ENCODE measurements at regions of chr6 and their contacts with region 1.

Region 1: GRCh38 chr6:145814501-145815308 is at the start of gene FBXO30:
- DNase-seq: peak; percentile 91
- H3K4me3 Mint-ChIP-seq: peak within 1 kb of the TSS; percentile 93
- H3K27ac Mint-ChIP-seq: peak within 1 kb of the TSS; percentile 94
- H3K4me1 Mint-ChIP-seq: peaks cover 34% of the 10 kb centered on the region
- H3K27me3 Mint-ChIP-seq: no peaks in the 10 kb centered on the region
- total RNA-seq, gene FBXO30: 5.0 to 5.1 TPM

Region 2: GRCh38 chr6:145734486-145735355 is 80.0 kb before region 1 on chr6:
- CTCF ChIA-PET with region 1: interaction called, 10 read pairs
- POLR2A ChIA-PET with region 1: interaction called, 37 read pairs
- intact Hi-C with region 1: loop called (anchors 1 kb)
- DNase-seq: peak; percentile 81
- H3K4me3 Mint-ChIP-seq: peak overlapping the region; percentile 89
- H3K27ac Mint-ChIP-seq: peak overlapping the region; percentile 95
- H3K4me1 Mint-ChIP-seq: peaks cover 22% of the 10 kb centered on the region
- H3K27me3 Mint-ChIP-seq: no peaks in the 10 kb centered on the region

Region 3: GRCh38 chr6:145865175-145865574 is 50.5 kb after region 1 on chr6:
- CTCF ChIA-PET with region 1: no interaction called
- POLR2A ChIA-PET with region 1: no interaction called
- intact Hi-C with region 1: loop called (anchors 1 kb)
- DNase-seq: no peak
- H3K4me3 Mint-ChIP-seq: no peak overlapping the region
- H3K27ac Mint-ChIP-seq: peak overlapping the region; percentile 67
- H3K4me1 Mint-ChIP-seq: peaks cover 32% of the 10 kb centered on the region
- H3K27me3 Mint-ChIP-seq: no peaks in the 10 kb centered on the region

Region 4: DNA sequence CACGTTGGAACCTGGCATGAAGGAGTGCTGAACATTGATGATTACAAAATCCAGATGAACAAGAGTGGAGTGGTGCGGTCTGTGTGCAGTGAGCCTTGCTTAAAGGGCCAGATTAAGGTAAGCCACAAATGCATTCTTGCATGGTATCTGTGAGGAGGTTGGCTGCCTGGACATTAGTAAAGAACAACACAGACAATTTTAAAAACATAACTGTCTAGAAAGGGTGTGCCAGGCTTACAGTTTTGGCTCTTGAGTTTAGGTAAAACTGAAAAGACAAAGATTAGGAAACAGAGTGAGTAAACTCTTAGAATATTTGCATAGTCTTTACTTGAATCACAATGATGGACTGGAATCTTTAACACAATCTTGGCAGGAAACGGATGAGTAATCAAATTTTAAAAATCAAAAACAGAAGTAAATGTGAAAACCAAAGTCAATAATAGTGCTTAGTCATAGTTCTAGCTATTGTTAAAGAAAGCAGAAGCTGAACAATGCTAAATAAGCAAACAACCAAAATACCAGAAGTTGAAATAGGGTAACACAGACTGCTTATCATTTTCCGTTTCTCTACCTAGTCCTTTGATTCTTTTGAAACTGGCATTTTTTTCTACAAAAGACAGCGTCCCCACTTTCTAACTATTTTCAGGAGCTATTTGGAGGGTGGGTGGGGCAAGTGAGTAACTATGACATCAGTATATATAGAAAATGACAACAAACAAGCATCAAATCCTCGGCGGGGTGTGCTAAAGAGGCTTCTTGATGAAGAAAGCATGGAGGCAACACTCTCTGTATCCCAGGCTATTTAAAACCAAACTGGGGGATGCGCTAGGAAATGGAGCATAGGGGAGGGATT is 543.1 kb after region 1 on chr6:
- CTCF ChIA-PET with region 1: no interaction called
- POLR2A ChIA-PET with region 1: no interaction called
- intact Hi-C with region 1: loop called (anchors 10 kb)
- DNase-seq: no peak
- H3K4me3 Mint-ChIP-seq: no peak overlapping the region
- H3K27ac Mint-ChIP-seq: no peak overlapping the region
- H3K4me1 Mint-ChIP-seq: peaks cover 4% of the 10 kb centered on the region
- H3K27me3 Mint-ChIP-seq: peaks cover 7% of the 10 kb centered on the region

Region 5: DNA sequence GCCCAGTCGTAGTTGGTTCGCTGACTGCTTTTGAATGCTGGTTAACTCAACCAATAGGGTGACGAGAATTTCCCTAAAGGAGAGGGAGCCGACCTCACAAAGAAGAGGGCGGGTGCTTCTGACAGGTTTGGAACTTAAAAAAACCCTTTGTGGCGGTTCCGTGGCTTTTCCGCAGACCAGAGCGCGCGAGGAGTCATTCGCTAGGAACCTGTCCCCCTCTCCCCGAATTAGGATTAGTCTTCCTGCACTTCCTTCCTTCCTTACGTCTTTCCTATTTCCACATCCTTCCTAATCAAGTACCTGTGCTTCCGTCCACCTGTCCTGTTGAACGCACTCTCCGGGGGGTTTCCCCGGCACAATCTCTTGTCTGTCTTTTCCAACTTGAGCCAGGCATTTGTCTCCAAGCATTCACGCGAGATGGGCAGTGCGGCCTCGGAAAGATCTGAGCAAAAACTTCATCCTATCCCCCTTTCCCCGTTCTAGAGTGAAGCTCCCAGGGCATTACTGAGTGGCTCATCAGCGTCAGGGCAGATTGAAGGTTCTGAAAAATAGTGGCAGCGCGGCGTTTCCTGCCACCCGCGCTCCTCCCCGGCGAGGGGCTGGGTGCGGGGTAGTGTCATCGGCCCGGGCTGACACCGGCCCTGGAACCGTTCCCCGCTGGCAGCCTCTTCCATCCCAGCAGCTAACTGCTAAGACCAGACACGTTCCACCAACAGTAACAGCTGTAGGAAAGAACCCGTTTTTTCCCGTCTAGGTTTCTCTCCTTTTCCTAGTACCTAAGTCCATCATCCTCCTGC is 1388.0 kb after region 1 on chr6:
- CTCF ChIA-PET with region 1: no interaction called
- POLR2A ChIA-PET with region 1: interaction called, 3 read pairs
- intact Hi-C with region 1: loop called (anchors 10 kb)
- DNase-seq: peak; percentile 87
- H3K4me3 Mint-ChIP-seq: peak overlapping the region; percentile 81
- H3K27ac Mint-ChIP-seq: peak overlapping the region; percentile 96
- H3K4me1 Mint-ChIP-seq: peaks cover 21% of the 10 kb centered on the region
- H3K27me3 Mint-ChIP-seq: no peaks in the 10 kb centered on the region

Measured in activated CD4-positive, alpha-beta memory T cell treated with anti-CD3 and anti-CD28 coated beads for 36 hours (primary cell).